Caco-2 (cell line): ENCODE measurements at regions of chr3 and their contacts with region 1.

Region 1: DNA sequence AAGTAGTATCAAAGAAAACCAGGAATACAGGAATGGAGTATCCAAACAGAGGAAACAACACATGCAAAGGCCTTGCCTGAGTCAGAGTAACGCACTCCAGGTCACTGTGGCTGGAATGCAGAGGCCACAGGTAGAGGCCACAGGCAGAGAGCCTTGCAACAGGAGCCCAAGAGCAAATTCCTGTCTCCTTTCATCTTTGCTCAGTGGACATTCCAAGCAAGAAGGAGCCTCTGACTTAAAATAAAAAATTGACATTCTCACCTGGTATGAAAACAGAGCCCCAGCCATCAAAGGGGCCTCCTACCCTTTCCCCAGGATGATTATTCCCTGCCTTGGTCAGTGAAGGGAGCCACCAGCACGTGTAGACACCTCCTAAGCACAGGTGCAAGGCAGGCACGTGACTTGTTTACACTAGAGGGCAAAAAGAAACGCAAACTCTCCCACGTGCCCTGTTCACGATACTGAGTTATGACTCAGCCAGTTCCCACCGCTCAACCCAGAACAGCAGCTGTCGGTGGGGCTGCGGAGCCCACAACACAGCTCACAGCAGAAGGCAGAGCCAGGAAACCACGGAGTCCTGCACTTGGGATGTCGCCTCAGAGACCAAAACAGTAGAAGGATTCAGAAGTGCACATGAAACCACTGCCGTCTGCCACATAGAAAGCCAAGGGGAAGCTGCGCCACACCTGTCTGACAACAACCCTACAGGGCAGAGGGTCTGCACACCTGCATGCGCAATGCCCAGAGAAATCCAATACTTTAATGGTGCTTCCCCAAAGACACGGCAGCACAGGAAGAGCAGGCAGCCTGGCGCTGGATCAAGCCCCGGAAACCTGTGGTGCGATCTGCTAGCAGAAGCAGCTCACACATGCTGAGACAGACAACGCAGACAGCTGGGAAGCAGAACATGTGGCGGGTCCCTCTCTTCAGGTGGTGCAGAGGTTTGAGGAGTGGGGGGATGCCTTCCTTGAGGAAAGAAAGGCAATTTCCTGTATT is 52.1 kb downstream of the ITGB5 start:
- DNase-seq: peak; percentile 93 to 98
- H3K4me3 ChIP-seq: peak overlapping the region; percentile 30
- H3K4me3 Mint-ChIP-seq: peak overlapping the region; percentile 74
- H3K27ac Mint-ChIP-seq: peak overlapping the region; percentile 100
- H3K4me1 ChIP-seq: peaks cover 74% of the 10 kb centered on the region
- H3K4me1 Mint-ChIP-seq: peaks cover 51% of the 10 kb centered on the region
- H3K27me3 ChIP-seq: no peaks in the 10 kb centered on the region
- H3K27me3 Mint-ChIP-seq: no peaks in the 10 kb centered on the region
- CTCF ChIP-seq: no peak

Region 2: GRCh38 chr3:124761250-124761796 is 73.7 kb before region 1 on chr3:
- CTCF ChIA-PET with region 1: no interaction called
- POLR2A ChIA-PET with region 1: no interaction called
- intact Hi-C with region 1: loop called (anchors 5 kb)
- DNase-seq: peak; percentile 75 to 80
- H3K4me3 ChIP-seq: no peak overlapping the region
- H3K4me3 Mint-ChIP-seq: peak overlapping the region; percentile 38
- H3K27ac Mint-ChIP-seq: peak overlapping the region; percentile 44
- H3K4me1 ChIP-seq: peaks cover 9% of the 10 kb centered on the region
- H3K4me1 Mint-ChIP-seq: peaks cover 21% of the 10 kb centered on the region
- H3K27me3 ChIP-seq: no peaks in the 10 kb centered on the region
- H3K27me3 Mint-ChIP-seq: no peaks in the 10 kb centered on the region
- CTCF ChIP-seq: peak; percentile 92 to 94

Region 3: GRCh38 chr3:124786441-124787241 is 48.4 kb before region 1 on chr3:
- CTCF ChIA-PET with region 1: interaction called, 6 read pairs
- POLR2A ChIA-PET with region 1: no interaction called
- intact Hi-C with region 1: loop called (anchors 1 kb)
- DNase-seq: no peak
- H3K4me3 ChIP-seq: no peak overlapping the region
- H3K4me3 Mint-ChIP-seq: no peak overlapping the region
- H3K27ac Mint-ChIP-seq: peak overlapping the region; percentile 53
- H3K4me1 ChIP-seq: peaks cover 9% of the 10 kb centered on the region; the same call in 1 of the 2 replicates
- H3K4me1 Mint-ChIP-seq: peaks cover 6% of the 10 kb centered on the region
- H3K27me3 ChIP-seq: no peaks in the 10 kb centered on the region
- H3K27me3 Mint-ChIP-seq: no peaks in the 10 kb centered on the region
- CTCF ChIP-seq: peak; percentile 24 to 25

Region 4: GRCh38 chr3:124812291-124813265 is 22.4 kb before region 1 on chr3:
- CTCF ChIA-PET with region 1: interaction called, 3 read pairs
- POLR2A ChIA-PET with region 1: interaction called, 3 read pairs
- intact Hi-C with region 1: loop called (anchors 1 kb)
- DNase-seq: peak in 1 of 2 experiments; percentile 53
- H3K4me3 ChIP-seq: no peak overlapping the region
- H3K4me3 Mint-ChIP-seq: no peak overlapping the region
- H3K27ac Mint-ChIP-seq: peak overlapping the region; percentile 85
- H3K4me1 ChIP-seq: peaks cover 52% of the 10 kb centered on the region
- H3K4me1 Mint-ChIP-seq: peaks cover 14% of the 10 kb centered on the region
- H3K27me3 ChIP-seq: no peaks in the 10 kb centered on the region
- H3K27me3 Mint-ChIP-seq: no peaks in the 10 kb centered on the region
- CTCF ChIP-seq: no peak

Region 5: GRCh38 chr3:124887177-124887931 is 52.3 kb after region 1 on chr3 and contains the start of gene ITGB5:
- CTCF ChIA-PET with region 1: no interaction called
- POLR2A ChIA-PET with region 1: interaction called, 7 read pairs
- intact Hi-C with region 1: loop called (anchors 1 kb)
- DNase-seq: peak; percentile 88 to 90
- H3K4me3 ChIP-seq: peak within 1 kb of the TSS; percentile 69
- H3K4me3 Mint-ChIP-seq: peak within 1 kb of the TSS; percentile 94
- H3K27ac Mint-ChIP-seq: peak within 1 kb of the TSS; percentile 88
- H3K4me1 ChIP-seq: peaks cover 29% of the 10 kb centered on the region
- H3K4me1 Mint-ChIP-seq: peaks cover 17% of the 10 kb centered on the region
- H3K27me3 ChIP-seq: no peaks in the 10 kb centered on the region
- H3K27me3 Mint-ChIP-seq: no peaks in the 10 kb centered on the region
- CTCF ChIP-seq: no peak
- total RNA-seq, gene ITGB5: 123 and 132 TPM in 2 replicates

Region 6: DNA sequence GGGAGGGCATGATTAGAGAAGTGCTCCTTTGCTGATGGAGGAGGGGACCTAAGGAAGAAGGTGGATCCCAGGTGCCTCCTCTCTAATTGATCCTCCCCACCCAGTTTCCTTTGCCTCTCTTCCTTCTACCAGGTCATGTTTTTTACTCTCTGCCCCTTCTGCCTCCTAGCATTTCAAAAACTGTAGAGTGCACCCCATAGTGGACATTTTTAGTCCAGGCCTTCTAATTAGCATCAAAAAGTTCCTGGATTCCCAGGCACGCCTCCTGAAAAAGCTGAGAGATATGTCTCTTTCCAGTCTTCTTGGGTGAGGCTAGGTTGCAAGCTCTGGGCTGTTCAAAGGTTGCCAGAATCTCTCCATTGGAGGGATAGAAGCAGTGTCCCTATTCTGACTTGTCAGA is 70.8 kb after region 1 on chr3:
- CTCF ChIA-PET with region 1: interaction called, 4 read pairs
- POLR2A ChIA-PET with region 1: no interaction called
- intact Hi-C with region 1: loop called (anchors 2 kb)
- DNase-seq: no peak
- H3K4me3 ChIP-seq: no peak overlapping the region
- H3K4me3 Mint-ChIP-seq: no peak overlapping the region
- H3K27ac Mint-ChIP-seq: no peak overlapping the region
- H3K4me1 ChIP-seq: no peaks in the 10 kb centered on the region; the same call in 1 of the 2 replicates
- H3K4me1 Mint-ChIP-seq: no peaks in the 10 kb centered on the region
- H3K27me3 ChIP-seq: no peaks in the 10 kb centered on the region
- H3K27me3 Mint-ChIP-seq: no peaks in the 10 kb centered on the region
- CTCF ChIP-seq: peak in 1 of 2 experiments; percentile 25

Region 7: GRCh38 chr3:125003369-125003853 is 168.4 kb after region 1 on chr3:
- CTCF ChIA-PET with region 1: no interaction called
- POLR2A ChIA-PET with region 1: interaction called, 3 read pairs
- intact Hi-C with region 1: loop called (anchors 5 kb)
- DNase-seq: peak; percentile 88 to 91
- H3K4me3 ChIP-seq: no peak overlapping the region
- H3K4me3 Mint-ChIP-seq: peak overlapping the region; percentile 17
- H3K27ac Mint-ChIP-seq: peak overlapping the region; percentile 38
- H3K4me1 ChIP-seq: peaks cover 42% of the 10 kb centered on the region
- H3K4me1 Mint-ChIP-seq: peaks cover 23% of the 10 kb centered on the region
- H3K27me3 ChIP-seq: no peaks in the 10 kb centered on the region
- H3K27me3 Mint-ChIP-seq: no peaks in the 10 kb centered on the region
- CTCF ChIP-seq: peak in 1 of 2 experiments; percentile 4